K562 (cell line): ENCODE measurements at regions of chr11 and their contacts with region 1.

Region 1: GRCh38 chr11:20080032-20080685 is 80.1 kb downstream of the DBX1 start:
- DNase-seq: peak; percentile 36 to 86 (median 58)
- ATAC-seq: peak; percentile 90
- H3K4me3 ChIP-seq: peak overlapping the region; percentile 26
- H3K27ac ChIP-seq: peak overlapping the region; percentile 45
- H3K4me1 ChIP-seq: peaks cover 4 to 47% of the 10 kb centered on the region in 2 experiments; a peak in 4 of 5 replicates
- H3K27me3 ChIP-seq: no peaks in the 10 kb centered on the region
- CTCF ChIP-seq: no peak
- EP300 ChIP-seq: peak; percentile 93; the same call in 1 of the 2 replicates
- POLR2A ChIP-seq: no peak
- RAD21 ChIP-seq: 0 out of 4 replicates have a peak, but pooled peaks of 1 of the 2 experiments have one; percentile 6

Region 2: DNA sequence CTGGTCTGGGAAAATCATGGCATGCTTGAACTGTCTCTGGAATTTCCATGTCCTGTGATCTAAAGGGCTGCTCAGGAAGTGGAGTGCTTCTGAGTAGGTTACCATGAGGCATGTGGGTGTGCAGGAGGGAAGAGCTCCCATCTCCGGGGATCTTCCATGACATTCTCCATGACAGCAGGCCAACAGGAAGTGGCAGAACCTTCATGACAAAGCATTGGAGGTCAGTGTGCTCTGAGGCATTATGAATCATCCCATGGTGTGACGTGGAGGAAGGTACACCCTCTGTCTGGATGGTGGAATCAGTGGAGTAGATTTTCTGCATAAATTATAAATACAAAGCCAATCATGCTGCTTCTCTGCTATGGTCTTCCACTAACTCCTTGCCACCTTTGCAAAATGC is 699.8 kb before region 1 on chr11:
- CTCF ChIA-PET with region 1: no interaction called
- POLR2A ChIA-PET with region 1: no interaction called
- in situ Hi-C with region 1: no loop called
- intact Hi-C with region 1: no loop called
- DNase-seq: no peak
- ATAC-seq: no peak
- H3K4me3 ChIP-seq: no peak overlapping the region
- H3K27ac ChIP-seq: no peak overlapping the region
- H3K4me1 ChIP-seq: no peaks in the 10 kb centered on the region
- H3K27me3 ChIP-seq: peaks cover 15 to 39% of the 10 kb centered on the region in 2 experiments
- CTCF ChIP-seq: no peak
- EP300 ChIP-seq: no peak
- POLR2A ChIP-seq: no peak
- RAD21 ChIP-seq: no peak

Region 3: GRCh38 chr11:19432370-19433061 is 647.6 kb before region 1 on chr11:
- CTCF ChIA-PET with region 1: no interaction called
- POLR2A ChIA-PET with region 1: no interaction called
- in situ Hi-C with region 1: no loop called
- intact Hi-C with region 1: no loop called
- DNase-seq: no peak
- ATAC-seq: peak; percentile 47; the same call in 1 of the 3 replicates
- H3K4me3 ChIP-seq: no peak overlapping the region
- H3K27ac ChIP-seq: no peak overlapping the region
- H3K4me1 ChIP-seq: no peaks in the 10 kb centered on the region
- H3K27me3 ChIP-seq: peaks cover 6 to 21% of the 10 kb centered on the region in 2 experiments
- CTCF ChIP-seq: no peak
- EP300 ChIP-seq: no peak
- POLR2A ChIP-seq: no peak
- RAD21 ChIP-seq: no peak

Region 4: GRCh38 chr11:19978668-19979518 is 101.3 kb before region 1 on chr11:
- CTCF ChIA-PET with region 1: no interaction called
- POLR2A ChIA-PET with region 1: no interaction called
- in situ Hi-C with region 1: no loop called
- intact Hi-C with region 1: loop called (anchors 5 kb)
- DNase-seq: peak in 3 of 4 experiments; percentile 26 to 74 (median 27)
- ATAC-seq: peak; percentile 68
- H3K4me3 ChIP-seq: no peak overlapping the region
- H3K27ac ChIP-seq: peak overlapping the region; percentile 89
- H3K4me1 ChIP-seq: peaks cover 28 to 91% of the 10 kb centered on the region in 2 experiments
- H3K27me3 ChIP-seq: no peaks in the 10 kb centered on the region
- CTCF ChIP-seq: no peak
- EP300 ChIP-seq: peak; percentile 93
- POLR2A ChIP-seq: no peak
- RAD21 ChIP-seq: peak in 1 of 2 experiments; percentile 36; a peak in 2 of 4 replicates

Region 5: DNA sequence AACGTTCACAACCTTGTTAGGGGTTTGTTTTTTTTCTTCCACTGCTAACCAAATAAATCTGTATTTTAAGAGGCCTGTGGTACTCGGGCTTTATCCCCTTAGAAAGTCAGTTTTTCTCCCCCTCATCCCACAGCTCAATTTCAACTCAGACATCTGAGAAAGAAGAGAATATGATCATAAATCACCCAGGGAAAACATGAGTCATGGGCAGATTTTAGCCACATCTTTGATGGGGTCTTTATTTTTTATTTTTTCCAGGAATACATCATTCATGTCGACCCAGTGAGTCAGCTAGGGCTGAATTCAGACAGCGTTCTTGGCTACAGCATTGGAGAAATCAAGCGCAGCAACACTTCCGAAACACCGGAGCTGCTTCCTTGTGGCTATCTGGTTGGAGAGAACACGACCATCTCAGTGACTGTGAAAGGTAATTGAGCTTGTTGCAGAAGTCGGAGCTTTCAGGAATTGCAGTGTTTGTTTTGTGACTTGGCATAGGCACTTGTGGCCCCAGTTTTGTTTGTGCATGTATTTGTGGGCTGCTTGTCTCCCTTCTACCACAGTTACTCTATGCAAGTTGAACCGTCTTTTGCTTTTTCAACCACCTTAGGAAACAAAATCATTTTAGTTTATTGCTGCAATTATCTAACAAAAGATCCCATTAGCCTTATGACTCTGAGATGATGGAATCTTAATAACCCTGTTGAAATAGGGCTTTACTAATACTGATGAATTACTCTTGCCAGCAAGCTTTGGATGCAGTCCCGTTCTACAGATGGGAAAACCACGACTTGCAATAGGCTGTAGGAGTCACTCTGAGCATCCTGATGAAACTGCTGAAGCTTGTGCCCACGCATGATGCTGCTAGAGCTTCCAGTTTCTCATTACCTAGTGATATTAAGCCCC is 17.4 kb after region 1 on chr11:
- CTCF ChIA-PET with region 1: no interaction called
- POLR2A ChIA-PET with region 1: interaction called, 11 read pairs
- in situ Hi-C with region 1: no loop called
- intact Hi-C with region 1: no loop called
- DNase-seq: peak in 2 of 4 experiments; percentile 30 to 51
- ATAC-seq: peak; percentile 26; the same call in 1 of the 3 replicates
- H3K4me3 ChIP-seq: no peak overlapping the region
- H3K27ac ChIP-seq: no peak overlapping the region
- H3K4me1 ChIP-seq: peaks cover 4 to 19% of the 10 kb centered on the region in 2 experiments; a peak in 3 of 5 replicates
- H3K27me3 ChIP-seq: no peaks in the 10 kb centered on the region; a peak in 1 of 5 replicates
- CTCF ChIP-seq: no peak
- EP300 ChIP-seq: peak; percentile 47; the same call in 1 of the 2 replicates
- POLR2A ChIP-seq: no peak
- RAD21 ChIP-seq: no peak